Activated CD4-positive, alpha-beta T cell treated with anti-CD3 and anti-CD28 coated beads for 36 hours (primary cell): ENCODE measurements at regions of chr12 and their contacts with region 1.

Region 1: DNA sequence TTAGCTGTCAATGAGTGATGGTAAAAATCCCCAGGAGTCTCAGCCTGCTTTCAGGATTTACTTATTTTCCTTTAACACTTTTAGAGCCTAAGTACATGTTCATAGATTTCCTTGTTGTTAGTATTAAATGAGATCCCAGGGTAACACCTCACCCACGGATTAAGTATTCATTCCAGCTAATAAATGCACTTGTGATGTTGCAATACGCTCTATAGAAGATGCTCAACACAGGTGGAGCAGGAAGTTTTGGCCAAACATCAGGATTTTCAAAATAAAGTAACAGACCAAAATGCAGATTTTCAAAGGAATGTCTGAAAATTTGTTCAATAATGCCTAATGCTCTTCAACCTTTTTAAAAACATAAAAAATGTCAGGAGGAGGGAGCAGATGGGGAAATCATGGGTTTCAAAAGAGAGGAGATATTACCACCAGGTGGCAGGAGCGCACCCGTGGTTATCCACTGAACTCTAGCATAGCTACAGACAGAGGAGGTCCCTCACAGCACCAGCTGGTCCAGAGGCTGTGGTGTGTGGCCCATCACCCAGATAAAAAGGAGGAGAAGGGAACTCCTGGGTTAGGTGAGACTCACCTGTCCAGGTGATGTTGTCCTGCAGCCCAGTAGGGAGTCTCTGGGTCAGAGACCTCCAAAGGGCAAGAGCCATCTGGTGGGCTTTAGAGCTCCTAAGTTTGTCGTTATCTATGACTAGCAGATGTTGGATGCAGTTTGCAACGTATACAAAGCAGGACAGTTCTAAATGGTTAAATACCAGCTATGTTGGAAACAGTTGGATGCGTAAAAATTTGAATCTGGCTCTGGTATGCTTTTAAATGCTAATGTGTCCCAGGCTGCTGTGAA is 1158.4 kb upstream of the TMEM132C start:
- DNase-seq: peak; percentile 67
- ATAC-seq: peak; percentile 71
- H3K4me3 Mint-ChIP-seq: no peak overlapping the region
- H3K27ac Mint-ChIP-seq: no peak overlapping the region
- H3K4me1 Mint-ChIP-seq: no peaks in the 10 kb centered on the region
- H3K27me3 Mint-ChIP-seq: peaks cover 24% of the 10 kb centered on the region

Region 2: DNA sequence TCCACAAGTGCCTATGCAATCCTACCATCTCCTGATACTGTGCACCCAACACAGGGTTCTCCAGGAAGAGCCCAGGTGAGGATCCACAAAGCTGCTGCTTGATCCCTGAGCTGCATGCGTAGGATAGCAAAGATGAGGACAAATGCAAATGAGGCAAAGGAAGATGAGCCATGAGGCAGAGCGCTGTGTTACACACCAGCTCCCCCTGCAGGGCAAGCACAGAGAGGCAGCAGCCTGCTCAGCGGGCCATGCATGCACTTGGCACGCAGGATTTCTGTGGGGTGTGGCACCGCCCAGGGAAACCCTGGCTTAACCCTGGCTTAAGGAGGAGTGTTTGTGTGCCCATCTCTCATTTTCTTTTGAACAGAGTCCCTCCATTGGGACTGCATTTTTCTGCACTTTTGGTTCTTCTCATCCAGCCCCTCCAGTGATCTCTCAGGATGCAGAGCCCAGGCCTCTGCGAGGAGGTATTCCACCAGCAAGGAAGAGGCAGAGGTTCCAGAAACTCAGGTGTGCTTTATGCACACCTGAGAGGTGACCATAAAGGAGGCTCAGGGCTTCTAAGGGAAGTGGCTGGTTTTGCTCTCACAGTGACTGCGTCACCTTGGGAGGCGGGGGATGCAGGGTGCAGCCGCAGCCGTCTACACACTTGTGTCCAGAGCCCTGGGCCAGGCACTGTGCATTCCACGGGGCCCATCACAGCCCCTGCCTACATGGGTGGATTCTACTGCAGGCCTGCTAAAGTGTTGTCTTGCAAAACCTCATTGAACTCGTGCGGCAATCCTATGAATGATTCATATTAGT is 185.1 kb after region 1 on chr12:
- CTCF ChIA-PET with region 1: interaction called, 7 read pairs
- POLR2A ChIA-PET with region 1: no interaction called
- intact Hi-C with region 1: loop called (anchors 1 kb)
- DNase-seq: peak; percentile 70
- ATAC-seq: peak; percentile 81
- H3K4me3 Mint-ChIP-seq: no peak overlapping the region
- H3K27ac Mint-ChIP-seq: no peak overlapping the region
- H3K4me1 Mint-ChIP-seq: no peaks in the 10 kb centered on the region
- H3K27me3 Mint-ChIP-seq: peaks cover 3% of the 10 kb centered on the region

Region 3: DNA sequence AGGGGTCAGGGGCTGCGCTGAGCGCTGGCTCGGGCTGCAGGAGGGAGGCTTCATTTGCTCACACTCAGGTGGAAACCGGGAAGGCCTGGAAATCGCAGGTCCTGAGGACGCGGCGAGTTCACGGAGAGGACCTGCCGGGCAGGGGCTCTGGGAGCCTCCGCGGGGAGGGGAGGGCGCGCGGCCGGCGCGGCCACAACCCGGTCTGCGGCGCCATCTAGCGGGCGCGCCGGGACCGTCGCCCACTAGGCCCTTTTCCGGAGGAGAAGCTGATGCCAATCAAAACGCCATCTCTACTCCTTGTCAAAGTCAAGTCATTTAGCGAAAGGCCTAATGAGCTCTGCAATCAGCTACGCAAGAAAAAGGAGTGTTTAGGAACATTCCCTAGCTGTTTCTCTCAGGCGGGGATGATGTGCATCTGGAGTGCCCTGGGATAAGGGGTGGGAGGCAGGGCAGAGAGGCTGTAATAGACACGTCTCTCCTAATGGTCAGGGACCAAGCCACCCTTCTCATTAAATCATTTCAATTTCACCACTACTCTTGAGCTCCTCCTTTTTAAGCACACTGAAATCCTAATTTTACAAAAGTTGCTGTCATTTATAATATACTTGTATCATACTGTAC is 272.6 kb after region 1 on chr12:
- CTCF ChIA-PET with region 1: interaction called, 14 read pairs
- POLR2A ChIA-PET with region 1: no interaction called
- intact Hi-C with region 1: loop called (anchors 1 to 2 kb)
- DNase-seq: peak; percentile 65
- ATAC-seq: peak; percentile 53
- H3K4me3 Mint-ChIP-seq: no peak overlapping the region
- H3K27ac Mint-ChIP-seq: no peak overlapping the region
- H3K4me1 Mint-ChIP-seq: no peaks in the 10 kb centered on the region
- H3K27me3 Mint-ChIP-seq: peaks cover 7% of the 10 kb centered on the region

Region 4: DNA sequence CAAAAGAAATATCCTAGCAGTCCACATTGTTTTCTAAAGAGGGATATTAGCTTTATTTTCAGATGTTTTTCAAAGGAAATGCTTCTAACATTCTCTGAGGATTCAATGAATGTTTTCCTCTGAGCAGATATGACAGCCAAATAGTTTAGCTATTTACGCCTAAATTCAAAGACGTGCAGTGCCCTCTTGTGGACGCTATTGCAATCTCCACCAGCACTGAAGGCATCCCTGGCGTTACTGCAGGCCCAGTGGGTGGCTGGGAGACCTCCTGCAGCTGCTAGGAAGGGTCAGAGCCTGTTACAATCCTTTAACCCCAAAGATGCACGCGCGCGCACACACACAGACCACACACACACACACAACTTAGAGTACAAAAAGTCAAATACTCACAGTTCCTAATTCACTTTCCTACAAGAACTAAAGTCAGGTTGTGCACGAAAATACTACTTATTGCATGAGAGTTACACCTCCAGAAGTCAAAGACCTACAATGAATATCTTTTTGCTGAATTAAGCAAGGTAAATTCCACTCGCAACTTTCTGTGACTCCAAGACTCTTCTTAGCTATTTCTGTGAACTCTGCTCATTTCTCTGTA is 569.0 kb after region 1 on chr12:
- CTCF ChIA-PET with region 1: interaction called, 4 read pairs
- POLR2A ChIA-PET with region 1: no interaction called
- intact Hi-C with region 1: loop called in 1 of 2 experiments (anchors 5 kb)
- DNase-seq: peak; percentile 74
- ATAC-seq: no peak
- H3K4me3 Mint-ChIP-seq: no peak overlapping the region
- H3K27ac Mint-ChIP-seq: no peak overlapping the region
- H3K4me1 Mint-ChIP-seq: no peaks in the 10 kb centered on the region
- H3K27me3 Mint-ChIP-seq: no peaks in the 10 kb centered on the region

Region 5: DNA sequence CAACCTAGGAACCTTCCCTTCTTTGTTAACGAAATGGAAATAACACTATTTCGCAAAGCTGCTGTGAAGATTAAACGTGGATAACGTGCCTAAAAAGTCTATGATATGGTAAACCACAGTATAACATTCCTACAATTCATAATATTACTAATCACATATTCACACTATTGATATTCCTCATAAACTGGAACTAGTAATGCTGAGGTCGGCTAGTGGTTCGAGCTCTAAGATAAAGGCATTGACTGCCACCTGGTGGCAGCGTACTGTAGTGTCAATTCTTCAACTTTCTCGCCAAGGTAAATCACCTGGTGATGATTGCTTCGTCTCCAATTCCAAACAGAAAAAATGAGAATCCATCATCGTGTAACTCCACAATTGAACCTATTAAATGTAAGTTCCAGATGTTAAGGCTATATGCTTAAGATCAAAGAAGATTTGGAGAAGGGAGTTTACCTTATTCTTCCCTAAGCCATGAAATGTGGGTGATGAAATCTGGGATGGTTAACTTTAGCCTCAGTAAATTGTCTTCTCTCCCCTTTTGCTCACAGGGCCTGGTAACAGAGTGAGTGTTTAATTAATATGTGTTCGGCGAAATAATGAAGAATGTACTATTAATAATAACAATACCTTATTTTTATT is 960.9 kb after region 1 on chr12:
- CTCF ChIA-PET with region 1: no interaction called
- POLR2A ChIA-PET with region 1: no interaction called
- intact Hi-C with region 1: loop called in 1 of 2 experiments (anchors 5 kb)
- DNase-seq: peak; percentile 49
- ATAC-seq: no peak
- H3K4me3 Mint-ChIP-seq: no peak overlapping the region
- H3K27ac Mint-ChIP-seq: no peak overlapping the region
- H3K4me1 Mint-ChIP-seq: no peaks in the 10 kb centered on the region
- H3K27me3 Mint-ChIP-seq: no peaks in the 10 kb centered on the region